Activated CD8-positive, alpha-beta T cell treated with anti-CD3 and anti-CD28 coated beads, Interleukin-2, amount 10 ng/mL, durations not matched to agents 7 days and 5 days (primary cell): ENCODE measurements at regions of chr5 and their contacts with region 1.

Region 1: GRCh38 chr5:151115274-151115905 is 34.6 kb upstream of the TNIP1 start:
- DNase-seq: peak; percentile 77
- ATAC-seq: peak; percentile 76
- H3K4me3 Mint-ChIP-seq: no peak overlapping the region
- H3K27ac Mint-ChIP-seq: peak overlapping the region; percentile 61
- H3K4me1 Mint-ChIP-seq: peaks cover 2% of the 10 kb centered on the region
- H3K27me3 Mint-ChIP-seq: no peaks in the 10 kb centered on the region

Region 2: DNA sequence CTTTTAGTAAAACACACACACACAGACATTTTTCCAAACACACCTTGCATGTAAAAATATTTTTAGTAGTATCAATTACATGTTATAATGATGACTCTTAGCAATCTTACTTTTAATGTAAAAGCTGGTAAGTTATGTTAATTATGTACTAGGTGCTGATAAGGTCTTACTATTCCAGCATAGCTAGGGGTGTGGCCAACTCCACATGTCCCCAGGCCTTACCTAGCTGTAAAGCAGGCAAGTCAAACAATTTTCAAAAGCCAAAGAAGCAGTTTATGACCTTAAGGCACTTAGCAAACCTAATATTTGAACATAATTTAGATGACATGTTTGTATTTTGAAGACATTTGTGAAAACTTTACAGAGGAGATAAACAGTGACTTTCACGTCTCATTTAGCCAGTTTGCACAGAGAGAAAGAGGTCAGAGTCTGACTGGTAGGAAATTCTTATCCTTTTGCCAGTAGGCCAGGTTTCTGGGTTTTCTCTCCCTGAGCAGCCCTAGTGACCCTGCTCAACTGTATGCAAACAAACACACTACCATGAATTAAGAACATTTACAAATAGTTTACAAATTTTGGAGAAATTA is 121.5 kb before region 1 on chr5:
- CTCF ChIA-PET with region 1: no interaction called
- POLR2A ChIA-PET with region 1: no interaction called
- DNase-seq: no peak
- ATAC-seq: no peak
- H3K4me3 Mint-ChIP-seq: no peak overlapping the region
- H3K27ac Mint-ChIP-seq: no peak overlapping the region
- H3K4me1 Mint-ChIP-seq: no peaks in the 10 kb centered on the region
- H3K27me3 Mint-ChIP-seq: no peaks in the 10 kb centered on the region

Region 3: GRCh38 chr5:151026679-151027078 is 88.7 kb before region 1 on chr5:
- CTCF ChIA-PET with region 1: no interaction called
- POLR2A ChIA-PET with region 1: no interaction called
- DNase-seq: no peak
- ATAC-seq: no peak
- H3K4me3 Mint-ChIP-seq: no peak overlapping the region
- H3K27ac Mint-ChIP-seq: no peak overlapping the region
- H3K4me1 Mint-ChIP-seq: no peaks in the 10 kb centered on the region
- H3K27me3 Mint-ChIP-seq: no peaks in the 10 kb centered on the region

Region 4: GRCh38 chr5:151051066-151051930 is 64.1 kb before region 1 on chr5:
- CTCF ChIA-PET with region 1: interaction called, 297 read pairs
- POLR2A ChIA-PET with region 1: interaction called, 4 read pairs
- DNase-seq: peak; percentile 83
- ATAC-seq: peak; percentile 84
- H3K4me3 Mint-ChIP-seq: no peak overlapping the region
- H3K27ac Mint-ChIP-seq: peak overlapping the region; percentile 40
- H3K4me1 Mint-ChIP-seq: peaks cover 14% of the 10 kb centered on the region
- H3K27me3 Mint-ChIP-seq: no peaks in the 10 kb centered on the region

Region 5: GRCh38 chr5:151080623-151081430 is 34.6 kb before region 1 on chr5 and contains the start of gene TNIP1:
- CTCF ChIA-PET with region 1: interaction called, 98 read pairs
- POLR2A ChIA-PET with region 1: no interaction called
- DNase-seq: peak; percentile 93
- ATAC-seq: peak; percentile 91
- H3K4me3 Mint-ChIP-seq: peak within 1 kb of the TSS; percentile 85
- H3K27ac Mint-ChIP-seq: peak within 1 kb of the TSS; percentile 86
- H3K4me1 Mint-ChIP-seq: peaks cover 82% of the 10 kb centered on the region
- H3K27me3 Mint-ChIP-seq: no peaks in the 10 kb centered on the region
- total RNA-seq, gene TNIP1: 132 to 138 TPM

Region 6: GRCh38 chr5:151104795-151105194 is 10.6 kb before region 1 on chr5:
- CTCF ChIA-PET with region 1: interaction called, 40 read pairs
- POLR2A ChIA-PET with region 1: interaction called, 3 read pairs
- DNase-seq: no peak
- ATAC-seq: no peak
- H3K4me3 Mint-ChIP-seq: no peak overlapping the region
- H3K27ac Mint-ChIP-seq: no peak overlapping the region
- H3K4me1 Mint-ChIP-seq: peaks cover 13% of the 10 kb centered on the region
- H3K27me3 Mint-ChIP-seq: no peaks in the 10 kb centered on the region

Region 7: DNA sequence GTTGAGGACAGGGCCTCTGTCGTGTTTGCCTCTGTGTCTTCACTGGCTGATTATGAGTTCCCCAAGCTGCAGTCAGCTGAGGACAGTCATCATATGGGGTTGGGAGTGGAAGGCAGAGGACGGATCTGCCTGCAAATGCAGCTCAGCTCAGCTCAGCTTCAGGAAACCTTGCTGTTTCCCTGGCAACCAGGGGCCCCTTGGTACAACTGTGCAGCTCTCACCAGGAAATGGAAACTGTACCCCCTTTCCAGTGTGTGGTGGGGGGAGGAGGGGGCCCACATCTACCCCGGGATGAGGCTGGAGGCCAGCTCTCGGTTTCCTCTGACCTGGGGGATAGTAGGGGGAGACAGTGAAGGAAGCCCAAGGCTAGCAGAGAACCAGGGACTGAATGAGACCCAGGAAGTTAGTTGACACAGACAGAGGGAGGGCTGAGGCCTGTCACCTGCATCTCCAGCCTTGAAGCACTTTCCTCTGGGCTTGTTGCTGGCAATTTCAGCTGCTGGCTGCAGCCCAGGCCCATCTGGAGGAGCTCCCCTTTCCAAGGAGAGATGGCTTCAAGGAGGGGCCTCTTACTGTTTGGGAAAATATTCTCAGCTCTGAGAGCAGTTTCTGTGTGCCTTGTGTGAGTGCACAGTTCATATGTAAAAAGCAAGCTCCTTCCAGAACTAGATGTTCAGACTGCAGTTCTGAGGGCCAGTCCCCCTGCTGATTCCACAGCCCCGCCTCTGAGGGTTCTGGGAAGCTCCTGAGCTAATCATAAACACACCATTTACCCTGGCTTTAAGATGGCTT is 35.3 kb after region 1 on chr5:
- CTCF ChIA-PET with region 1: interaction called, 25 read pairs
- POLR2A ChIA-PET with region 1: no interaction called
- DNase-seq: peak; percentile 86
- ATAC-seq: peak; percentile 84
- H3K4me3 Mint-ChIP-seq: peak overlapping the region; percentile 64
- H3K27ac Mint-ChIP-seq: peak overlapping the region; percentile 92
- H3K4me1 Mint-ChIP-seq: peaks cover 93% of the 10 kb centered on the region
- H3K27me3 Mint-ChIP-seq: no peaks in the 10 kb centered on the region

Region 8: DNA sequence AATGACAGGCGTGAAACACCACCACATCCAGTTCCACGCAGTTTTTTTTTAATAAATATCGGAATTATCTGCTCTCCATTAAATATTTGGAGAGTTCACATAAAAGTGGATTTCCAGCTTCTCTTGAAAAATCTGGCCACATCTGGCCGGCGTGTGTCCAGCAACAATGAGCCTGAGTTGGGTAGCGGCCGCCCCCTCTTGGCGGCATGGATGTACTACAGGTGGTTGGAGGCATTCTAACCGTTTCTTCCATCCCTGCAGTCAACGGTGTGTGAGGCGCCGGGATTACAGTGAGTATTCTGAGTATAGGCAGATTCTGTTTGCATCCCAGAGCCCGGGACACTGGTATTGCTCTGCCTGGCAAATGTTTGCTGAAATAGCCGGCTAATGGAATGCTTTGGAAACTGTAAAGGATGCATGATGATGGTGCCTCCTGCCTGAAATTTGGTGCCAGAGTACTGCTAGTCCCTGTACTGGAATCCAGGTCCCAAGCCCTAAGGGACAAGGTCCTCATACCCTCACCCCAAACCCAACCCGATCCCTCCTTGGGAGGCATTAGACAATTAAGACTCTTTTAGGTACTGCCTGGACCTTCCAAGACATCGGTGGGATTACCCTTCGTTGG is 124.0 kb after region 1 on chr5:
- CTCF ChIA-PET with region 1: interaction called, 15 read pairs
- POLR2A ChIA-PET with region 1: interaction called, 4 read pairs
- DNase-seq: peak; percentile 72
- ATAC-seq: peak; percentile 70
- H3K4me3 Mint-ChIP-seq: no peak overlapping the region
- H3K27ac Mint-ChIP-seq: no peak overlapping the region
- H3K4me1 Mint-ChIP-seq: peaks cover 46% of the 10 kb centered on the region
- H3K27me3 Mint-ChIP-seq: no peaks in the 10 kb centered on the region